PC-9 (cell line): ENCODE measurements at regions of chr4 and their contacts with region 1.

Region 1: GRCh38 chr4:22607382-22607781 is 85.4 kb upstream of the GBA3 start:
- DNase-seq: peak in 1 of 2 experiments; percentile 31
- H3K4me3 ChIP-seq: no peak overlapping the region
- H3K27ac ChIP-seq: no peak overlapping the region
- H3K4me1 ChIP-seq: no peaks in the 10 kb centered on the region
- H3K27me3 ChIP-seq: no peaks in the 10 kb centered on the region
- CTCF ChIP-seq: peak; percentile 62

Region 2: DNA sequence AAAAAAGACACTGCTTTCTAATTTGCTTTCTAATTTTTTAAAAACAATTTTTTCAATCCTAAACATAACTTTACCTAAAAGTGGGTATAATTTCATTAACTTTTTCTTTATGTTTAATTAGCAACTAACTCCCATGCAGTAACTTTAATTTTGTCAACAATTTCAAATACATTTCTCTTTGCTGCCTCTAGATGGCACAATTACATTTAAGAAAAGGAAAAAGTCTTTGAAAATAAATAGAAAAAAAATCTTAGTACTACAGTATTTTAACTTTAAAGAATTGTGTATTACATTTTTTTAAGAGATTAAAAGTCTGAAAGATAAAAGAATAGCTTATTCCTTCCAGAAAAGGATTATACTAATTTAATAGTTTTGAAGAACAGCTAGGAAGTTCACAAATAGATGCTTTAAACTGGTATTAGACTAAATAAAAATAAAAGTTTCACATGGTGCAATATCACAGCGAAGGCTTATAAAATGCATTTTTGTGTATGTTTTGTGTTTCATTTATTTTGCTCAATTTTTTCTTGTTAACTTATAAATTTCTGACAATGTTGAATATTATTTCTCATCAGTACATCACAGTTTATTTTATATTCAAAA is 196.6 kb before region 1 on chr4:
- CTCF ChIA-PET with region 1: interaction called, 6 read pairs
- POLR2A ChIA-PET with region 1: no interaction called
- intact Hi-C with region 1: loop called (anchors 1 kb)
- DNase-seq: peak in 1 of 2 experiments; percentile 44
- H3K4me3 ChIP-seq: no peak overlapping the region
- H3K27ac ChIP-seq: no peak overlapping the region
- H3K4me1 ChIP-seq: no peaks in the 10 kb centered on the region
- H3K27me3 ChIP-seq: no peaks in the 10 kb centered on the region
- CTCF ChIP-seq: peak; percentile 73